PC-3 (cell line): ENCODE measurements at regions of chr4 and their contacts with region 1.

Region 1: GRCh38 chr4:159487284-159487747 is 384.4 kb downstream of the RAPGEF2 start:
- DNase-seq: peak; percentile 58
- ATAC-seq: peak; percentile 85
- H3K4me3 ChIP-seq: 0 out of 2 replicates have a peak overlapping the region, but pooled peaks have one; percentile 38
- H3K27ac ChIP-seq: no peak overlapping the region
- H3K4me1 ChIP-seq: peaks cover 5% of the 10 kb centered on the region; the same call in 1 of the 2 replicates
- H3K27me3 ChIP-seq: no peaks in the 10 kb centered on the region
- CTCF ChIP-seq: peak; percentile 83

Region 2: GRCh38 chr4:159608437-159608836 is 121.1 kb after region 1 on chr4:
- CTCF ChIA-PET with region 1: no interaction called
- POLR2A ChIA-PET with region 1: no interaction called
- intact Hi-C with region 1: loop called (anchors 5 kb)
- DNase-seq: peak; percentile 6
- ATAC-seq: no peak
- H3K4me3 ChIP-seq: no peak overlapping the region
- H3K27ac ChIP-seq: no peak overlapping the region
- H3K4me1 ChIP-seq: no peaks in the 10 kb centered on the region
- H3K27me3 ChIP-seq: no peaks in the 10 kb centered on the region
- CTCF ChIP-seq: no peak; the same call in 1 of the 2 replicates

Region 3: GRCh38 chr4:159758061-159758460 is 270.7 kb after region 1 on chr4:
- CTCF ChIA-PET with region 1: no interaction called
- POLR2A ChIA-PET with region 1: no interaction called
- intact Hi-C with region 1: loop called (anchors 2 kb)
- DNase-seq: no peak
- ATAC-seq: no peak
- H3K4me3 ChIP-seq: no peak overlapping the region
- H3K27ac ChIP-seq: no peak overlapping the region
- H3K4me1 ChIP-seq: no peaks in the 10 kb centered on the region
- H3K27me3 ChIP-seq: no peaks in the 10 kb centered on the region
- CTCF ChIP-seq: no peak

Region 4: DNA sequence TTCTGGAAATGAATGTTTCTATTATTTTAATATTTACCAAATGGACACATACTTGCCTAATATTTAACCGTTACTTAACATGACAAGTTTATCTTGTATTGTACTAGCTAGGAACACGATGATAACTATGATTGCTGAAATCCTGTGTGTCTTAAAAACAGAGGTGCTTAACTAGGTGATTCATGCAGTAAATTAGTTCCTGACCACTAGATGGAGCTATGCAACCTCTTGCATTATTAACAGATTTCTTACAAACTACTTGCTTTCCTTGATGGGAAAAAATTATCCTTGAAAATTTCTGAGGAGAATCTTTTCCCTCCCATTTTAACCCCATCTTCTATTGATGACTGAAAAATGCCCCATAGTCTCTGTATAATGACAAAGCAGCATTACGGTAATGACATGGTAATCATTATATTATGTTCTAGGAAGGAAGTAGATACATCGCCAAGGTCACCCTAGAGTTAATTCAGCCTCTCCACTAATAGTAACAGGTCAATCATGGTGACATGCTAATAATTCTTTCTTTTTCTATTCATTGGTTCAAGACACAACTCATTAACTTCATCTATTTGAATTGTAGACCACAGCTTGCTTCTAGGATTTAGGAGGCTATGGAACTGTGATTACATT is 459.8 kb after region 1 on chr4:
- CTCF ChIA-PET with region 1: no interaction called
- POLR2A ChIA-PET with region 1: no interaction called
- intact Hi-C with region 1: loop called (anchors 5 kb)
- DNase-seq: peak; percentile 72
- ATAC-seq: peak; percentile 49; the same call in 1 of the 2 replicates
- H3K4me3 ChIP-seq: no peak overlapping the region
- H3K27ac ChIP-seq: no peak overlapping the region
- H3K4me1 ChIP-seq: no peaks in the 10 kb centered on the region
- H3K27me3 ChIP-seq: no peaks in the 10 kb centered on the region
- CTCF ChIP-seq: peak; percentile 72

Region 5: GRCh38 chr4:161252520-161253141 is 1765.3 kb after region 1 on chr4:
- CTCF ChIA-PET with region 1: no interaction called
- POLR2A ChIA-PET with region 1: no interaction called
- intact Hi-C with region 1: loop called (anchors 10 kb)
- DNase-seq: peak; percentile 60
- ATAC-seq: peak; percentile 42
- H3K4me3 ChIP-seq: no peak overlapping the region
- H3K27ac ChIP-seq: no peak overlapping the region
- H3K4me1 ChIP-seq: no peaks in the 10 kb centered on the region; the same call in 1 of the 2 replicates
- H3K27me3 ChIP-seq: no peaks in the 10 kb centered on the region
- CTCF ChIP-seq: peak; percentile 80